ENCODE measurements at regions of chr13 and their contacts with region 1.

Region 1: GRCh38 chr13:21638319-21639282 is 32.3 kb upstream of the FGF9 start:
- DNase-seq: peak; percentile 29
- H3K4me3 ChIP-seq: no peak overlapping the region
- H3K27ac ChIP-seq: no peak overlapping the region
- H3K4me1 ChIP-seq: peaks cover 0 to 7% of the 10 kb centered on the region in 2 experiments; a peak in 1 of 4 replicates
- H3K27me3 ChIP-seq: peaks cover 25% of the 10 kb centered on the region
- CTCF ChIP-seq: peak; percentile 90
- EP300 ChIP-seq: no peak
- RAD21 ChIP-seq: peak; percentile 69

Region 2: GRCh38 chr13:21603531-21604448 is 34.8 kb before region 1 on chr13 and contains the start of gene MICU2:
- CTCF ChIA-PET with region 1: interaction called, 12 read pairs
- POLR2A ChIA-PET with region 1: no interaction called
- DNase-seq: peak; percentile 92
- H3K4me3 ChIP-seq: peak within 1 kb of the TSS; percentile 91 to 92
- H3K27ac ChIP-seq: peak within 1 kb of the TSS; percentile 86 to 95
- H3K4me1 ChIP-seq: no peaks in the 10 kb centered on the region; a peak in 2 of 4 replicates
- H3K27me3 ChIP-seq: no peaks in the 10 kb centered on the region; the same call in 1 of the 2 replicates
- CTCF ChIP-seq: no peak
- EP300 ChIP-seq: peak in 1 of 2 experiments; percentile 52; a peak in 1 of 4 replicates
- RAD21 ChIP-seq: no peak
- polyA plus RNA-seq, gene MICU2: 46.4 and 56.0 TPM in 2 replicates

Region 3: GRCh38 chr13:21616880-21617279 is 21.7 kb before region 1 on chr13:
- CTCF ChIA-PET with region 1: interaction called, 53 read pairs
- POLR2A ChIA-PET with region 1: no interaction called
- DNase-seq: no peak
- H3K4me3 ChIP-seq: no peak overlapping the region
- H3K27ac ChIP-seq: no peak overlapping the region
- H3K4me1 ChIP-seq: no peaks in the 10 kb centered on the region; a peak in 1 of 4 replicates
- H3K27me3 ChIP-seq: peaks cover 19% of the 10 kb centered on the region; the same call in 1 of the 2 replicates
- CTCF ChIP-seq: no peak
- EP300 ChIP-seq: no peak
- RAD21 ChIP-seq: no peak

Region 4: DNA sequence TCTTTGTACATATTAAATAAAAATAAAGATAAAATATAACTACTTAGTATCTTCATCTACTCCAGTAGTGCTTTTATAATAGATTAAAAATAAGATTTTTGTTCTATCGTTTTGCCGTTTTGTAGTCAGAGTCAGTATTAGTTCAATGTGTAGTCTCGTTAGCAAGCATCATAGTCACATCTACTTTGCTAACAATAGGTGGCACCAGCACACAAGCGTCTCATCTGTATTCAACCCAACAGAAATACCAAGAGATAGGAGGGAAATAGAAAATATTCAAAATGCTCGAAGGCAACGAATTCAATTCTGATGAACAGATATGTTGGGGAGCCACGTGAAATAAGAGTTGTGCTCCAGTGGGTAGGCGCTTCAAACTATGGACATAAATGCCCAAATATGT is 13.2 kb before region 1 on chr13:
- CTCF ChIA-PET with region 1: interaction called, 53 read pairs
- POLR2A ChIA-PET with region 1: no interaction called
- DNase-seq: peak; percentile 36
- H3K4me3 ChIP-seq: peak overlapping the region in 1 of 2 experiments; percentile 37; a peak in 2 of 4 replicates
- H3K27ac ChIP-seq: no peak overlapping the region
- H3K4me1 ChIP-seq: no peaks in the 10 kb centered on the region
- H3K27me3 ChIP-seq: peaks cover 10% of the 10 kb centered on the region; the same call in 1 of the 2 replicates
- CTCF ChIP-seq: peak; percentile 66
- EP300 ChIP-seq: no peak
- RAD21 ChIP-seq: peak; percentile 68

Region 5: GRCh38 chr13:21657538-21657937 is 18.9 kb after region 1 on chr13:
- CTCF ChIA-PET with region 1: interaction called, 12 read pairs
- POLR2A ChIA-PET with region 1: no interaction called
- DNase-seq: no peak
- H3K4me3 ChIP-seq: no peak overlapping the region
- H3K27ac ChIP-seq: no peak overlapping the region
- H3K4me1 ChIP-seq: no peaks in the 10 kb centered on the region
- H3K27me3 ChIP-seq: no peaks in the 10 kb centered on the region
- CTCF ChIP-seq: no peak
- EP300 ChIP-seq: no peak
- RAD21 ChIP-seq: no peak

Region 6: GRCh38 chr13:21831654-21832324 is 193.2 kb after region 1 on chr13:
- CTCF ChIA-PET with region 1: no interaction called
- POLR2A ChIA-PET with region 1: no interaction called
- DNase-seq: no peak
- H3K4me3 ChIP-seq: no peak overlapping the region
- H3K27ac ChIP-seq: no peak overlapping the region
- H3K4me1 ChIP-seq: no peaks in the 10 kb centered on the region
- H3K27me3 ChIP-seq: no peaks in the 10 kb centered on the region
- CTCF ChIP-seq: no peak
- EP300 ChIP-seq: no peak
- RAD21 ChIP-seq: no peak

Region 7: DNA sequence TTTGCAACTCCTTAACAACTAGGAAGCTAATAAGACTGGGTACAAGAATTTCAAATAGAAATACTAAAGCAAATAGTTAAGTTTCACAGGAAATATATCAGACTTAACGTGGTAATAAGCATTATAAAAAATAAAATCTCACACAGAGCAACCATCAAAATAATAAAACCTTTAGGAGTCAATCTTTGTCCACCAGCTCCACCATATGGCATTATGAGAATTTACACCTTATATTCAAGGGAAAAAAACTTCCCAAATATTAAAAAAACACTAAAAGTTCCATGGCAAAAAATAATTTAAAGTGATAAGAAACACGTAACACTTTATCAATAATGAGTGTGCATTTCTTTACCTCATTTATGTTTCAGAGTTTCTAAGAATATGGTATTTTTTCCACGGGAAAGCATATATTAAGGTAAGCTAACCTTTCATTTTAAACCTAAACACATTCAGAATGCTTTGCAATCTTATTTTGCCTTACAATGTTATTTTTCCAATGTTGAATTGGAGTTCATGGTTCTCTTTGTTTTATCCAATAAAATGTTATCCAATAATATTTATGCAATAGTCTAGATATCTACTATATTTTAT is 1119.0 kb after region 1 on chr13:
- CTCF ChIA-PET with region 1: interaction called, 14 read pairs
- POLR2A ChIA-PET with region 1: no interaction called
- DNase-seq: peak; percentile 12
- H3K4me3 ChIP-seq: no peak overlapping the region
- H3K27ac ChIP-seq: no peak overlapping the region
- H3K4me1 ChIP-seq: no peaks in the 10 kb centered on the region
- H3K27me3 ChIP-seq: no peaks in the 10 kb centered on the region; the same call in 1 of the 2 replicates
- CTCF ChIP-seq: peak; percentile 62
- EP300 ChIP-seq: no peak
- RAD21 ChIP-seq: peak; percentile 64

Region 8: GRCh38 chr13:22801402-22802003 is 1162.9 kb after region 1 on chr13:
- CTCF ChIA-PET with region 1: interaction called, 16 read pairs
- POLR2A ChIA-PET with region 1: no interaction called
- DNase-seq: no peak
- H3K4me3 ChIP-seq: peak overlapping the region in 1 of 2 experiments; percentile 26; a peak in 1 of 4 replicates
- H3K27ac ChIP-seq: no peak overlapping the region
- H3K4me1 ChIP-seq: no peaks in the 10 kb centered on the region
- H3K27me3 ChIP-seq: peaks cover 19% of the 10 kb centered on the region; the same call in 1 of the 2 replicates
- CTCF ChIP-seq: peak; percentile 47
- EP300 ChIP-seq: no peak
- RAD21 ChIP-seq: peak; percentile 26